Stomach (tissue), 19 donors: ENCODE measurements at regions of chr12 and their contacts with region 1.

Region 1: GRCh38 chr12:55743116-55743921 is at the start of gene GDF11:
- DNase-seq: peak; percentile 60 to 89
- H3K4me3 ChIP-seq: peak within 1 kb of the TSS; percentile 59 to 74 (median 61)
- H3K27ac ChIP-seq: peak within 1 kb of the TSS; percentile 54 to 79 (median 65)
- H3K4me1 ChIP-seq: peaks cover 16 to 45% (median 43%) of the 10 kb centered on the region in 4 donors
- H3K27me3 ChIP-seq: peaks cover 0 to 38% (median 0%) of the 10 kb centered on the region in 3 donors
- CTCF ChIP-seq: no peak
- EP300 ChIP-seq: no peak
- POLR2A ChIP-seq: no peak
- total RNA-seq, gene GDF11: 0.29 to 4.6 (median 1.7) TPM

Region 2: DNA sequence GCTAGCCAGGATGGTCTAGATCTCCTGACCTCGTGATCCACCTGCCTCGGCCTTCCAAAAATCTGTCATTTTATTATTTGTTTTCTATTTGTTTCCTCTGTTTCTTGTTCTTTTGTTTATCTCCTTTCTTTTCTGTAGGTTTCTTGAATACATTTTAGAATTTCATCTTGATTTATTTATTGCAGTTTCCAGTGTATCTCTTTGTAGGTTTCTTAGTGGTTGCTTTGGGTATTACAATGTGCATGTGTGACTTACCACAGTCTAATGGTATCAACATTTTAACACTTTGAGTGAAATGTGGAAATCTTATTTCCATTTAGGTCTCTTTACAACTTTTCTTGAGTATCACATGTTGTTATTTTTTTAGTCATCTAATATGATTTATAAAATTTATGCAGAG is 918.9 kb before region 1 on chr12:
- intact Hi-C with region 1: no loop called
- DNase-seq: no peak
- H3K4me3 ChIP-seq: no peak overlapping the region
- H3K27ac ChIP-seq: no peak overlapping the region
- H3K4me1 ChIP-seq: no peaks in the 10 kb centered on the region
- H3K27me3 ChIP-seq: no peaks in the 10 kb centered on the region
- CTCF ChIP-seq: peak in 1 of 7 experiments; percentile 26
- EP300 ChIP-seq: no peak
- POLR2A ChIP-seq: no peak

Region 3: GRCh38 chr12:55797068-55797467 is 53.7 kb after region 1 on chr12:
- intact Hi-C with region 1: loop called (anchors 10 kb)
- DNase-seq: peak in 1 of 2 donors; percentile 80
- H3K4me3 ChIP-seq: no peak overlapping the region
- H3K27ac ChIP-seq: no peak overlapping the region
- H3K4me1 ChIP-seq: peaks cover 0 to 5% (median 0%) of the 10 kb centered on the region in 4 donors
- H3K27me3 ChIP-seq: no peaks in the 10 kb centered on the region
- CTCF ChIP-seq: peak in 3 of 7 experiments; percentile 8 to 33 (median 13)
- EP300 ChIP-seq: no peak
- POLR2A ChIP-seq: no peak

Region 4: GRCh38 chr12:55935738-55936151 is 192.4 kb after region 1 on chr12:
- intact Hi-C with region 1: loop called (anchors 5 kb)
- DNase-seq: peak in 1 of 2 donors; percentile 56
- H3K4me3 ChIP-seq: peak overlapping the region in 2 of 4 donors; percentile 15 to 29
- H3K27ac ChIP-seq: peak overlapping the region; percentile 36 to 78 (median 48)
- H3K4me1 ChIP-seq: peaks cover 26 to 53% (median 34%) of the 10 kb centered on the region in 4 donors
- H3K27me3 ChIP-seq: no peaks in the 10 kb centered on the region
- CTCF ChIP-seq: no peak
- EP300 ChIP-seq: no peak
- POLR2A ChIP-seq: no peak